PC-9 (cell line): ENCODE measurements at regions of chr1 and their contacts with region 1.

Region 1: DNA sequence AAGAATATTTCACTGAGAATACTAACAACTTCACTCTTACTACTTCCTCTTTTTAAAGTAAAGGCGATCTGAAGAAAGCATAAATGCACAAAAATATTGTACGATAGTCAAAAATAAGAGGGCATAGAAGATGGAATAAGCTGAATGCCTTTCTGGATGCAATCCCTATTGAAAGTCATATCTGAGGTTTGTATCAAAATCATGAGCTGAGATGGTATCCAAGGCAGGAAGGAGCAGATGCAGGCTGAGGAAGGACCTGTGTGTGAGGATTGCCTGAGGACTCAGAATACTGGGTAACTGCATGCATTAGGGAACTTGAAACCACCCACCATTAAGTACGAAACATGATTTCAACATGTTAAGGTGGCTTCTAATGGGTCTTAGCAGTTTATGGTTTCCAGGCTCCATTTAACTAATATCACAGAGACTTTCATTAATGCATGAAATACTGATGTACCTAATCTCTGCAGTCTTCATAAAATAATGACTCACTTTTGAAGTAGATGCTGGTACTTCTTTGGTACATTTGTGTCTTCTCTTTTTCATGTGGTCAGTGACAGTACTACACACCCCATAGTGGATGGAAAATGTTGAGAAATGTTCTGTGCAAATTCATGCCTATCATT is 29.6 kb upstream of the RGS1 start:
- DNase-seq: no peak
- H3K4me3 ChIP-seq: no peak overlapping the region
- H3K27ac ChIP-seq: no peak overlapping the region
- H3K4me1 ChIP-seq: peaks cover 41% of the 10 kb centered on the region
- H3K27me3 ChIP-seq: no peaks in the 10 kb centered on the region
- CTCF ChIP-seq: 0 out of 2 replicates have a peak, but pooled peaks have one; percentile 21

Region 2: GRCh38 chr1:191152776-191153494 is 1393.1 kb before region 1 on chr1:
- CTCF ChIA-PET with region 1: no interaction called
- POLR2A ChIA-PET with region 1: interaction called, 27 read pairs
- intact Hi-C with region 1: no loop called
- DNase-seq: no peak
- H3K4me3 ChIP-seq: no peak overlapping the region
- H3K27ac ChIP-seq: no peak overlapping the region
- H3K4me1 ChIP-seq: no peaks in the 10 kb centered on the region
- H3K27me3 ChIP-seq: no peaks in the 10 kb centered on the region
- CTCF ChIP-seq: no peak

Region 3: GRCh38 chr1:192489748-192490147 is 56.3 kb before region 1 on chr1:
- CTCF ChIA-PET with region 1: no interaction called
- POLR2A ChIA-PET with region 1: no interaction called
- intact Hi-C with region 1: loop called (anchors 5 kb)
- DNase-seq: peak; percentile 49 to 81
- H3K4me3 ChIP-seq: no peak overlapping the region
- H3K27ac ChIP-seq: no peak overlapping the region
- H3K4me1 ChIP-seq: peaks cover 23% of the 10 kb centered on the region
- H3K27me3 ChIP-seq: no peaks in the 10 kb centered on the region
- CTCF ChIP-seq: no peak